WTC11 (cell line): ENCODE measurements at regions of chr19 and their contacts with region 1.

Region 1: DNA sequence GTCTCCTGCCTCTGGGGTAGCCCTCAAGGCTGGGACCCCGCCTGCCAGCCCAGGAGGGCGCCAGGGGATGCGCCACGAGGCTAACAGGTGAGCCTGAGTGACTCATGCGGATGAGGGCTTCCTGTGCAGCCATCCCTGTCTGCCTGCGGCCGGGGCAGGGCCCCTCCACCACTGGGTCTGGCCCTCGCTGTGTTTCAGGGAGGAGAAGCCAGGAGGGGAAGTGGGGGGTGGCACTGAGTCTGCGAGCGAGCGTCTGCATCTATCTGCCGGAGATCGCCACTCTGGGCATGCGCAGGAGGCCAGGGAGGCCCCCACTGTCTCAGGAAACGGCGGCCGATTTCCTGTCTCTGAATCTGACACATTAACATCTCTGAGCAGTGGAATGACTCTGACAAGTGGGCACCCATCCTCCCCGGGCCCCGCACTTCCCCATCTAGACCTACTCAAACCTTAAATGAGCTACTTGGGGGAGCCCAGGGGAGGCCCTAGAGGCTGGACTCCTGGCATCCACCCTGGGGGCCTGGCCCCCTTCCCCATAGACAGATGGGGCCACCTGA is 19.7 kb downstream of the RFX1 start:
- DNase-seq: peak; percentile 83
- ATAC-seq: peak; percentile 69
- H3K4me3 Mint-ChIP-seq: peak overlapping the region; percentile 43
- H3K27ac Mint-ChIP-seq: peak overlapping the region; percentile 45; the same call in 1 of the 2 replicates
- H3K4me1 Mint-ChIP-seq: peaks cover 63% of the 10 kb centered on the region
- H3K27me3 Mint-ChIP-seq: no peaks in the 10 kb centered on the region
- CTCF ChIP-seq: no peak

Region 2: DNA sequence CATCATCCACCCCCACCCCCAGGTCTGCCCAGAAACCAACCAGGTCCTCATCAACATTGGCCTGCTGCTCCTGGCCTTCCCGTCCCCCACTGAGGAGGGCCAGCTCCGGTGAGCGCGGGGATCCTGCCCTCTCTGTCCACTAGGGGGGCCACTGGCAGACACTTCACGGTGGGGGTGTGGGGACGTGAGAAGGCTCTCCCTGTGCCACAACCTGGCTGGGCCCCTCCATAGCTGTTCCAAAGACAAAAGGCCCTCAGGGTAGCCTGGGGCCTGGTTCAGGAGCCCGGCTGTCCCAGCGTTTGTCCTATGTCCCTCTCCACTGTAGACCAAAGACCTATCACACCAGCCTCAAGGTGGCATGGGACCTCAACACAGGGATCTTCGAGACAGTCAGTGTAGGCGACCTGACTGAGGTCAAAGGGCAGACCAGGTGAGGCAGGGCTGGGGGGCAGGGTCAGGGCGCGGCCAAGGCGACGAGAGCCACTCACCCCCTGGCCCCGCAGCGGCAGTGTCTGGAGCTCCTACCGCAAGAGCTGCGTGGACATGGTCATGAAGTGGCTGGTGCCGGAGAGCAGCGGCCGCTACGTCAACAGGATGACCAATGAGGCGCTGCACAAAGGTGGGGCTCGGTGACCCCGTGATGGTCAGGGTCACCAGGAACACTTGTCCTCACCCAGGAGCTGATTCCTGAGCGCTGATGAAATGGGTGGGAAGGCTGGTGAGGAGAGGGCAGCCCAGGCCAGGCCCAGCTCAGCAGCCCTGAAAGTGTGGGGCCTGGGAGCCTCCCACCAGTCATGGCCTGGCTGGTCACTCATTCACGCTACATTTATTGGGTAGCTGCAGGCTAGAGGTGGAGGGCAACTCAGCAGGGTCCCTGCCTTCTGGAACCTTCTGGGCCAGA is 26.2 kb before region 1 on chr19:
- CTCF ChIA-PET with region 1: interaction called, 22 read pairs
- POLR2A ChIA-PET with region 1: interaction called, 6 read pairs
- DNase-seq: peak; percentile 61
- ATAC-seq: peak; percentile 9
- H3K4me3 Mint-ChIP-seq: no peak overlapping the region
- H3K27ac Mint-ChIP-seq: peak overlapping the region; percentile 87
- H3K4me1 Mint-ChIP-seq: peaks cover 6% of the 10 kb centered on the region
- H3K27me3 Mint-ChIP-seq: peaks cover 3% of the 10 kb centered on the region
- CTCF ChIP-seq: peak; percentile 8; the same call in 1 of the 2 replicates